Dorsolateral prefrontal cortex (tissue), 120 donors: ENCODE measurements at regions of chr1 and their contacts with region 1.

Region 1: GRCh38 chr1:182604169-182605164 is at the start of gene RGS16:
- DNase-seq: peak; percentile 77 to 94 (median 90)
- H3K4me3 ChIP-seq: peak within 1 kb of the TSS; percentile 17 to 76 (median 59)
- H3K27ac ChIP-seq: peak within 1 kb of the TSS in 20 of 59 donors; percentile 7 to 68 (median 41)
- H3K27me3 ChIP-seq: peaks cover 0 to 8% (median 0%) of the 10 kb centered on the region in 45 donors
- CTCF ChIP-seq: peak in 21 of 56 donors; percentile 3 to 47 (median 26)
- total RNA-seq, gene RGS16: 1.0 to 20.8 (median 3.8) TPM

Region 2: DNA sequence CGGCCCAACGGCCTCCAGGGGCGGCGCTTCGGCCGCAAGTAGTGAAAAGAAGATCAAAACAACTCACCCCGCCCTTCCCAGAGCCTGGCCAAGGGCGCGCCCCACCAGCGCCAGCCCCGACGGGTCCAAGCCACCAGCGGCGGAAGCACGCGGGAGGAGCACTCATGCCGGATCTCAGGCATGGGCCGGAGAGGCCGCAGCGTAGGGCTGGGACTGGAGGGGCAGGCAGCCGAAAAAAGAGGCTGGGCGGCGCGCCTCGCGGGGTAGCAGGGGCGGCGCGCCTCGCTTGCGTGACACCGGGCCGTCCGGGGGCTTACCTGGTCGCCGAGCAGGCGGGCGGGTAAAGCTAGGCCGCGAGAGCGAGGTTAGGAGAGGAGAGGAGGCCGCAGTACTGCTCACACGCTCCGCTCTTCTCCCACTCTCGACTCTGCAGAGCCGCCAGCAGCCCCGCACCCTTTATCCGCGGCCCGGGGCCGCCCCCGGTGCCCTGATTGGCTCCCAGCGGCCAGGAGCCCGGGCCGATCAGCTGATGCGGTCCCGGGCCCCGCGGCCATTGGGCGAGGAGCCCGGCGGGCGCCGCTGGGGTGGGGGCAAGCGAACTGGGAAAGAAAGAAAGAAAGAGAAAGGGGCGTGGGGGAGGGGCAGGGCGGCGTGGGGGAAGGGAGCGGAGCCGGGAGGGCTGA is 213.0 kb before region 1 on chr1 and contains the start of gene GLUL:
- intact Hi-C with region 1: loop called in 1 of 2 experiments (anchors 10 kb)
- DNase-seq: peak; percentile 79 to 96 (median 93)
- H3K4me3 ChIP-seq: peak within 1 kb of the TSS; percentile 67 to 99 (median 92)
- H3K27ac ChIP-seq: peak within 1 kb of the TSS; percentile 92 to 100 (median 98)
- H3K27me3 ChIP-seq: peaks cover 0 to 4% (median 0%) of the 10 kb centered on the region in 45 donors
- CTCF ChIP-seq: peak in 16 of 56 donors; percentile 3 to 44 (median 14)
- total RNA-seq, gene GLUL: 1,265 to 6,769 (median 2,230) TPM

Region 3: DNA sequence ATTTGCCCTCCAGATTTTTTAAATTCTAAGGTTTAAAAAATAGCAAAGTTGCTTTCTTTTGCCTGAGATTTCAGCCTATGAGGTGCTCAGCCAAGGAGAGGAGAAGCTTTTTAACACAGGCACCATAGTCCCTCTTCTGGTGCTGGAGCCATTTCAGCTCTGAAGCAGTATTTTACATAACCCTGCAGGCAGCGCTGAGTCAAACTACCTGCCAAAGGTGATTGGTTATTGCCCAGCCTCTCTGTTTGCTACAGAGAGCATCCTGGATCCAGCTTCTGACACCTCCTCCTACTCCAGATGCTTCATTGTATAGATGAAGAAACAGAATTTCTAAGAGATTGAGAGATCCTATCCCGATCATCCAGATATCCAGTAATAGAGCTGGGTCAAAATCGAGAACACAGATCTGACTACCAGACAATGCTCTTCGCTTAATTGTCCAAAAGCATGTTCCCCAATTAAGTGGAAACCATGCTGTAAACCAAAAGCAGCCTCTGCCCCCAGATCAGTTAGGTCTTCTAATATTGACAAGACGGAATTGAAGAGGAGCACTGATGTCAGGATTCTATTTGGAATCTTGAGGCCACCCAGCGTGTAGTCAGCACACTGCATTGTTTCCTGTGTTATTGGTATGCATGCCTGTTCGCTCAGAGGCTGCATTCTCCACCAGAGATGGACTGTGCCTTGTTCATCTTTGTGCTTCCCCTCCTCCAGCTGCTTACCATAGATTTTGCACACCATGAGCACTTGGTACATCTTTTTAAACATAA is 57.8 kb after region 1 on chr1:
- intact Hi-C with region 1: loop called in 1 of 2 experiments (anchors 5 kb)
- DNase-seq: peak in 1 of 10 donors; percentile 32
- H3K4me3 ChIP-seq: no peak overlapping the region
- H3K27ac ChIP-seq: no peak overlapping the region
- H3K27me3 ChIP-seq: peaks cover 0 to 11% (median 0%) of the 10 kb centered on the region in 45 donors
- CTCF ChIP-seq: peak in 3 of 56 donors; percentile 11 to 15 (median 13)

Region 4: GRCh38 chr1:182699393-182700350 is 95.2 kb after region 1 on chr1:
- intact Hi-C with region 1: no loop called
- DNase-seq: peak in 1 of 10 donors; percentile 39
- H3K4me3 ChIP-seq: peak overlapping the region in 18 of 59 donors; percentile 1 to 38 (median 18)
- H3K27ac ChIP-seq: peak overlapping the region in 2 of 59 donors; percentile 8 to 37
- H3K27me3 ChIP-seq: peaks cover 0 to 15% (median 0%) of the 10 kb centered on the region in 45 donors
- CTCF ChIP-seq: no peak

Region 5: GRCh38 chr1:182781841-182782586 is 177.5 kb after region 1 on chr1:
- intact Hi-C with region 1: loop called in 1 of 2 experiments (anchors 1 kb)
- DNase-seq: peak; percentile 20 to 79 (median 66)
- H3K4me3 ChIP-seq: no peak overlapping the region
- H3K27ac ChIP-seq: no peak overlapping the region
- H3K27me3 ChIP-seq: peaks cover 0 to 3% (median 0%) of the 10 kb centered on the region in 45 donors
- CTCF ChIP-seq: peak; percentile 25 to 88 (median 74)

Region 6: GRCh38 chr1:182839209-182840065 is 235.0 kb after region 1 on chr1 and contains the start of gene DHX9:
- intact Hi-C with region 1: loop called in 1 of 2 experiments (anchors 2 kb)
- DNase-seq: peak; percentile 76 to 97 (median 92)
- H3K4me3 ChIP-seq: peak within 1 kb of the TSS; percentile 55 to 98 (median 87)
- H3K27ac ChIP-seq: peak within 1 kb of the TSS; percentile 75 to 98 (median 93)
- H3K27me3 ChIP-seq: no peaks in the 10 kb centered on the region
- CTCF ChIP-seq: peak in 44 of 56 donors; percentile 8 to 60 (median 40)
- total RNA-seq, gene DHX9: 81.5 to 144 (median 114) TPM